Ovary (tissue), 10 donors: ENCODE measurements at regions of chr14 and their contacts with region 1.

Region 1: GRCh38 chr14:94136575-94137331 is 7.3 kb upstream of the IFI27L2 start:
- DNase-seq: peak; percentile 78 to 93 (median 90)
- H3K4me3 ChIP-seq: no peak overlapping the region
- H3K27ac ChIP-seq: no peak overlapping the region
- H3K4me1 ChIP-seq: peaks cover 2% of the 10 kb centered on the region
- H3K27me3 ChIP-seq: no peaks in the 10 kb centered on the region
- CTCF ChIP-seq: peak; percentile 82 to 91 (median 84)
- EP300 ChIP-seq: no peak
- POLR2A ChIP-seq: no peak

Region 2: GRCh38 chr14:93939304-93940229 is 197.2 kb before region 1 on chr14:
- intact Hi-C with region 1: loop called in 1 of 4 experiments (anchors 10 kb)
- DNase-seq: peak; percentile 18 to 73 (median 49)
- H3K4me3 ChIP-seq: peak overlapping the region; percentile 20
- H3K27ac ChIP-seq: no peak overlapping the region
- H3K4me1 ChIP-seq: no peaks in the 10 kb centered on the region
- H3K27me3 ChIP-seq: no peaks in the 10 kb centered on the region
- CTCF ChIP-seq: peak in 2 of 3 donors; percentile 26 to 32
- EP300 ChIP-seq: no peak
- POLR2A ChIP-seq: no peak

Region 3: GRCh38 chr14:94036313-94037050 is 100.3 kb before region 1 on chr14:
- intact Hi-C with region 1: loop called in 2 of 4 experiments (anchors 5 to 10 kb)
- DNase-seq: peak; percentile 36 to 72 (median 67)
- H3K4me3 ChIP-seq: no peak overlapping the region
- H3K27ac ChIP-seq: no peak overlapping the region
- H3K4me1 ChIP-seq: no peaks in the 10 kb centered on the region
- H3K27me3 ChIP-seq: no peaks in the 10 kb centered on the region
- CTCF ChIP-seq: peak; percentile 25 to 63 (median 41)
- EP300 ChIP-seq: no peak
- POLR2A ChIP-seq: no peak

Region 4: GRCh38 chr14:94051115-94051514 is 85.6 kb before region 1 on chr14:
- intact Hi-C with region 1: loop called in 1 of 4 experiments (anchors 5 kb)
- DNase-seq: peak; percentile 75 to 87 (median 81)
- H3K4me3 ChIP-seq: no peak overlapping the region
- H3K27ac ChIP-seq: no peak overlapping the region
- H3K4me1 ChIP-seq: no peaks in the 10 kb centered on the region
- H3K27me3 ChIP-seq: no peaks in the 10 kb centered on the region
- CTCF ChIP-seq: peak; percentile 15 to 60 (median 48)
- EP300 ChIP-seq: no peak
- POLR2A ChIP-seq: no peak

Region 5: DNA sequence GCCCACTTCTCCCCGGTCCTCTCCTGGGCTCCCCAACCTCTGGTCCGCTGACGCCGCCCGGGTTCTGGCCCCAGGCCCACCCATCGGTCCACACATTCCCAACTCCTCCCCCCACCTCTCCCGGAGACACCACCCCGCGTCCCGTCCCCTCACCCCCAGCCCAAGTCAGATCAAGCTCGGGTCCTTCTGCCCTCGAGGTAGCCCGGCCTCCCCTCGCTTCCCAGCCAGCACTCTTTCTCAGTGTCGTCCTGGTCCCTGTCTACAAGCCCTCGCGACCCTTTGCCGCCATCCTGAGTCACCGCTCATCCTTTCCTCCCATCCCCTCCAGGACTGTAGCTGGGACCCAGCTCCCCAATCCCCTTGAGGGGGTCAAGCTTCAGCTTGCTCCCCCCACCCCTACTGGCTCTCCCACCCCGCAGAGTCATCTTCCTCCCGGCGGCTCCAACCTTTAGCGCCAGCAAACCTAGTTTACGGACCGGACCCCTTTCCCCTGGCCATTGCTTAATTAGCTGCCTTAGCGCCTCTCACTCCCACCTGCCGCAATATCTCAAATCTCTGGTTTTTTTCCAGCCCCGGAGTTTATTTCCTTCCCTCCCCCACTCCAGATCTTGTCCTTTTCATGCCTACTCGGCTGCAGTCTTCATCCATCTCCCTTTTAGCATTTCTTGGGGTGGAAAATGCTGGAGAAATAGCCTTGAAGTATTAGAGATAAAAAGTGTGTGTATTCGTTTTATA is 38.4 kb after region 1 on chr14:
- intact Hi-C with region 1: loop called in 2 of 4 experiments (anchors 5 kb)
- DNase-seq: peak; percentile 60 to 76 (median 72)
- H3K4me3 ChIP-seq: peak overlapping the region; percentile 57
- H3K27ac ChIP-seq: peak overlapping the region; percentile 78 to 86
- H3K4me1 ChIP-seq: no peaks in the 10 kb centered on the region
- H3K27me3 ChIP-seq: no peaks in the 10 kb centered on the region
- CTCF ChIP-seq: no peak
- EP300 ChIP-seq: no peak
- POLR2A ChIP-seq: no peak

Region 6: DNA sequence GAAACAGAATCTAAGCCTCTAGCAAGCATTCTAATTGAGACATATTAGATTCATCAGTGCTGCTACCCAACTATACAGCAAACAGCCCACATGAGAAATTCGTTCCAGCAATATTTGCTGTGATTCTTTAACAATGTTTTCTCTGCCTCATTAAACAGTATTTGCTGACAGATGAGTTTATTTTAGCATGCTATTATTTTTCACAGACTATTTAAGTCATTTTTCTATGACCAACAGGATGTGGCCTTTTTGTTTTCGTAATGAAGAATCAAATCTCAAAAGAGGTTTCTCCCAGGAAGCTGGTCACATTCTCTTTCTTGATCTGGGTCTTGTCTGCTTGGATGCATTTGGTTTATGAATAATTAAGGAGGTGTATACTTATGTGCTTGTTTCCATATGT is 395.7 kb after region 1 on chr14:
- intact Hi-C with region 1: no loop called
- DNase-seq: no peak
- H3K4me3 ChIP-seq: no peak overlapping the region
- H3K27ac ChIP-seq: no peak overlapping the region
- H3K4me1 ChIP-seq: no peaks in the 10 kb centered on the region
- H3K27me3 ChIP-seq: no peaks in the 10 kb centered on the region
- CTCF ChIP-seq: no peak
- EP300 ChIP-seq: no peak
- POLR2A ChIP-seq: no peak